ENCODE measurements at regions of chr1 and their contacts with region 1.

Region 1: GRCh38 chr1:75785983-75786853 is at the start of gene RABGGTB:
- DNase-seq: peak; percentile 90 to 98 (median 92)
- ATAC-seq: peak; percentile 82
- H3K4me3 ChIP-seq: peak within 1 kb of the TSS; percentile 63
- H3K27ac ChIP-seq: peak within 1 kb of the TSS; percentile 95
- H3K4me1 ChIP-seq: peaks cover 0 to 5% of the 10 kb centered on the region in 2 experiments; a peak in 1 of 5 replicates
- H3K27me3 ChIP-seq: no peaks in the 10 kb centered on the region
- CTCF ChIP-seq: peak in 1 of 3 experiments; percentile 6; a peak in 1 of 6 replicates
- EP300 ChIP-seq: no peak
- POLR2A ChIP-seq: peak; percentile 99
- RAD21 ChIP-seq: 0 out of 4 replicates have a peak, but pooled peaks of 1 of the 2 experiments have one; percentile 6
- polyA plus RNA-seq, gene RABGGTB: 177 to 180 TPM

Region 2: GRCh38 chr1:75257424-75257823 is 528.8 kb before region 1 on chr1:
- CTCF ChIA-PET with region 1: no interaction called
- POLR2A ChIA-PET with region 1: interaction called, 10 read pairs
- in situ Hi-C with region 1: no loop called
- intact Hi-C with region 1: no loop called
- DNase-seq: peak in 1 of 4 experiments; percentile 9
- ATAC-seq: peak; percentile 57
- H3K4me3 ChIP-seq: no peak overlapping the region
- H3K27ac ChIP-seq: no peak overlapping the region
- H3K4me1 ChIP-seq: no peaks in the 10 kb centered on the region
- H3K27me3 ChIP-seq: no peaks in the 10 kb centered on the region
- CTCF ChIP-seq: 0 out of 6 replicates have a peak, but pooled peaks of 1 of the 3 experiments have one; percentile 20
- EP300 ChIP-seq: no peak
- POLR2A ChIP-seq: no peak
- RAD21 ChIP-seq: no peak

Region 3: DNA sequence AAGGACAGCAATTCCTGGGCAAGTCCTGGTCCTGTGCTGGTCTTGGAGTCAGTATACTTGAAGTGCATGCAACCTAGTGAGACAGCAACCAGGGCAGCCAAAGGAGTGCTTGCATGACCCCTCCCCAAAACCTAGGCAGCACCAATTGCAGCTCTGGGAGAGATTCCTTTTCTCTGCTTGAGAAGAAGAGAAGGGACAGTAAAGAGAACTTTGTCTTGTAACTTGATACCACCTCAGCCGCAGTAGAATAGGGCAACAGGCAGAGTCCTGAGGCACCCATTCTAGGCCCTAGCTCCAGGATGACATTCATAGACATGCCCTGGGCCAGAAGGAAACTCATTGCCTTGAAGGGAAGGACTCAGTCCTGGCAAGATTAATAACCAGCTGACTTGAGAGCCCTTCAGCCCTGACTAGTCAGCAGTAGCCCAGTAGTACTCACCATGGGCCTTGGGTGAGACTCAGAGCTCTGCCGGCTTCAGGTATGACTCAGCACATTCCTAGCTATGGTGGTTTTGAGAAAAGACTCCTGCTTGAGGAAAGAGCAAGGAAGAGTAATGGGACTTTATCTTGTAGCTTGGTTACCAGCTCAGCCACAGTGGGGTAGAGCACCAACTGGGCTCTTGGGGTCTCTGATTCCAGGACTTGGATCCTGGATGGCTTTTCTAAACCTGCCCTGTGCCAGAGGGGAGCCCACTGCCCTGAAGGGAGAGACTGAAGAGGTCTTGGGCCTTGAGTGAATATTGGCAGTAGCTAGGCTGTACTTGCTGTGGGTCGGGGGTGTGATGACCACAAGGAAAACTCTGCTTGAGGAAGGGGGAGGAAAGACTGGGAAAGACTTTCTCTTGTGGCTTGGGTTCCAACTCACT is 113.5 kb before region 1 on chr1:
- CTCF ChIA-PET with region 1: interaction called, 3 read pairs
- POLR2A ChIA-PET with region 1: interaction called, 14 read pairs
- in situ Hi-C with region 1: no loop called
- intact Hi-C with region 1: loop called (anchors 2 kb)
- DNase-seq: peak; percentile 50 to 92 (median 66)
- ATAC-seq: peak; percentile 89
- H3K4me3 ChIP-seq: no peak overlapping the region
- H3K27ac ChIP-seq: peak overlapping the region; percentile 91
- H3K4me1 ChIP-seq: peaks cover 7 to 36% of the 10 kb centered on the region in 2 experiments; a peak in 4 of 5 replicates
- H3K27me3 ChIP-seq: no peaks in the 10 kb centered on the region
- CTCF ChIP-seq: no peak
- EP300 ChIP-seq: peak; percentile 69
- POLR2A ChIP-seq: peak; percentile 52
- RAD21 ChIP-seq: no peak

Region 4: GRCh38 chr1:75745276-75745675 is 40.9 kb before region 1 on chr1:
- CTCF ChIA-PET with region 1: no interaction called
- POLR2A ChIA-PET with region 1: interaction called, 10 read pairs
- in situ Hi-C with region 1: no loop called
- intact Hi-C with region 1: no loop called
- DNase-seq: no peak
- ATAC-seq: no peak; the same call in 2 of the 3 replicates
- H3K4me3 ChIP-seq: no peak overlapping the region
- H3K27ac ChIP-seq: no peak overlapping the region
- H3K4me1 ChIP-seq: no peaks in the 10 kb centered on the region
- H3K27me3 ChIP-seq: no peaks in the 10 kb centered on the region
- CTCF ChIP-seq: no peak
- EP300 ChIP-seq: no peak
- POLR2A ChIP-seq: no peak
- RAD21 ChIP-seq: no peak

Region 5: DNA sequence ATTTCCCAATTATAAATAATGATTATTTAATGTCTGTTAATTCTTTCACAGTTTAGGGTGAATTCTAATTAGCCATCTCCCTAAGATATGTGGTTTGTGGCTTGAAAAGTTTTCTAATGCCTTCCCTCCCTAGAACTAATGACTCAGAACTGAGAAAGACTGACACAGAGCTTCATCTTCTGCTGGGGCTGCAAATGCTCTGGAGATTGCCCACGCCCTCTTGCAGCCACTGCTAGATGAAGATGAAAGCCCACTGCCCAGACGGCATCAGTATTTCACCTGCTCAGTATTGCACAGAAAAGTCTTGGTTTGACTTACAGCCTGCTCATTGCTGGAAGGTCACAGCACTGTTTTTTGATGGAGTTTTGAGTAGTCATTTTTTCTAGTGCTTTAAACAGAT is 389.8 kb after region 1 on chr1:
- CTCF ChIA-PET with region 1: no interaction called
- POLR2A ChIA-PET with region 1: no interaction called
- in situ Hi-C with region 1: no loop called
- intact Hi-C with region 1: no loop called
- DNase-seq: no peak
- ATAC-seq: no peak
- H3K4me3 ChIP-seq: no peak overlapping the region
- H3K27ac ChIP-seq: no peak overlapping the region
- H3K4me1 ChIP-seq: no peaks in the 10 kb centered on the region
- H3K27me3 ChIP-seq: no peaks in the 10 kb centered on the region
- CTCF ChIP-seq: no peak
- EP300 ChIP-seq: no peak
- POLR2A ChIP-seq: no peak
- RAD21 ChIP-seq: no peak

Region 6: DNA sequence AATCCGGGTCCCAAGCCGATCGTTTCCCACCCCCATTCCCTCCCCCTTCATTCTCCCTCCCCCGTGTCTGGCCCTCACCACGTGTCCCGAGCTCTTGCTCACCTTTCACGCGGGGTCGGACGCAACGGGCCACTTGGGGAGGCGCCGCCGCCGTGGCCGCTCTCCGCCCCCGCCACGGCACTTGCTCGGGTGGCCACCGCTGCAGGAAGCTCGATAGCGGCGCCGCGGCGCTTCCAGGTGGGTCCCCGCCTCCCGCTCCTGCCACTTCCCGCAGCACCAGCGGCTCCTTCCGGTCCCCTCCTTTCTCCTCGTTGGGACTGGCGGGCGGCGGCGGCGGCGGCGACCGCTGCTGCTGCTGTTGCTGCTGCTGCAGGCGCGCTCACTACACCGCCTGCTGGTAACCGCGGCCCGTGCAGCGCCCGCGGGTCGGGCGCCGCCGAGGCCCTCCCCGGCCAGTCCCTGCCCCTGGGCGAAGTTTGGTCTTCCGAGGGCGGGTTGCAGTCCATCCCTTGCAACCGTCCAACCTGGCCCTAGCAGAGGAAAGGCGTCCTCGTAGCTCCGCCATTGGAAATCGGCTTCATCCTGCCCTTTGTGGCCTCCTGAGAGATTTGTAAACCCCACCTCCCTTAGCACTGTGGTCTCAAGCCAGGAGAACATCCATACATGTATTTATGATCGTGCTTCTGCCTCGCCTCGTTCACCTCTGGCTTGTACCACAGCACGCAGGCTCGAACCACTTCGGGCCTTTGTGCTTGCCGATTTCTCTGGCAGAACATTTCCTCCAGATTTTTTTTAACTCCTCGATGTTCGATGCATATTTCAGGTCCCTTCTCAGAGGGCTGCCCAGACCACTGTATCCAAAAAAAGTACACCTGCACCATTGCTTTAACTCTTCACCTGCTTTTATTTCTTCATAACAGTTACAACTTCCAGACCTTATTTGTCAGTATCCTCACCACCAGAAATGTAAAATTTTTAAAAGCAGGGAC is 1897.2 kb after region 1 on chr1:
- CTCF ChIA-PET with region 1: no interaction called
- POLR2A ChIA-PET with region 1: no interaction called
- in situ Hi-C with region 1: no loop called
- intact Hi-C with region 1: loop called (anchors 5 kb)
- DNase-seq: peak; percentile 88 to 94 (median 90)
- ATAC-seq: peak; percentile 80
- H3K4me3 ChIP-seq: peak overlapping the region; percentile 66
- H3K27ac ChIP-seq: peak overlapping the region; percentile 96
- H3K4me1 ChIP-seq: peaks cover 5 to 7% of the 10 kb centered on the region in 2 experiments
- H3K27me3 ChIP-seq: no peaks in the 10 kb centered on the region
- CTCF ChIP-seq: peak; percentile 83 to 94 (median 85)
- EP300 ChIP-seq: no peak; the same call in 1 of the 2 replicates
- POLR2A ChIP-seq: peak; percentile 83
- RAD21 ChIP-seq: peak; percentile 76 to 80